ENCODE measurements at regions of chr21 and their contacts with region 1.

Region 1: GRCh38 chr21:36989699-36990507 is 16.6 kb upstream of the RIPPLY3 start:
- DNase-seq: peak; percentile 57 to 94 (median 82)
- ATAC-seq: peak; percentile 70
- H3K4me3 ChIP-seq: peak overlapping the region; percentile 59 to 63
- H3K4me3 Mint-ChIP-seq: peak overlapping the region; percentile 87
- H3K27ac ChIP-seq: peak overlapping the region; percentile 48 to 86
- H3K27ac Mint-ChIP-seq: peak overlapping the region; percentile 91
- H3K4me1 ChIP-seq: peaks cover 6% of the 10 kb centered on the region
- H3K4me1 Mint-ChIP-seq: peaks cover 22% of the 10 kb centered on the region
- H3K27me3 ChIP-seq: no peaks in the 10 kb centered on the region
- H3K27me3 Mint-ChIP-seq: no peaks in the 10 kb centered on the region
- CTCF ChIP-seq: peak; percentile 81

Region 2: GRCh38 chr21:36504067-36505058 is 485.5 kb before region 1 on chr21:
- CTCF ChIA-PET with region 1: interaction called, 4 read pairs
- POLR2A ChIA-PET with region 1: no interaction called
- intact Hi-C with region 1: loop called in 1 of 2 experiments (anchors 5 kb)
- DNase-seq: peak in 6 of 9 experiments; percentile 15 to 67 (median 50)
- ATAC-seq: no peak
- H3K4me3 ChIP-seq: no peak overlapping the region
- H3K4me3 Mint-ChIP-seq: no peak overlapping the region
- H3K27ac ChIP-seq: no peak overlapping the region
- H3K27ac Mint-ChIP-seq: no peak overlapping the region
- H3K4me1 ChIP-seq: no peaks in the 10 kb centered on the region
- H3K4me1 Mint-ChIP-seq: no peaks in the 10 kb centered on the region
- H3K27me3 ChIP-seq: no peaks in the 10 kb centered on the region
- H3K27me3 Mint-ChIP-seq: peaks cover 2% of the 10 kb centered on the region
- CTCF ChIP-seq: peak; percentile 97

Region 3: GRCh38 chr21:36934864-36935420 is 55.0 kb before region 1 on chr21:
- CTCF ChIA-PET with region 1: interaction called, 10 read pairs
- POLR2A ChIA-PET with region 1: no interaction called
- intact Hi-C with region 1: loop called in 1 of 2 experiments (anchors 1 kb)
- DNase-seq: no peak
- ATAC-seq: no peak
- H3K4me3 ChIP-seq: no peak overlapping the region
- H3K4me3 Mint-ChIP-seq: no peak overlapping the region
- H3K27ac ChIP-seq: no peak overlapping the region
- H3K27ac Mint-ChIP-seq: no peak overlapping the region
- H3K4me1 ChIP-seq: no peaks in the 10 kb centered on the region
- H3K4me1 Mint-ChIP-seq: peaks cover 3% of the 10 kb centered on the region
- H3K27me3 ChIP-seq: no peaks in the 10 kb centered on the region
- H3K27me3 Mint-ChIP-seq: no peaks in the 10 kb centered on the region
- CTCF ChIP-seq: no peak

Region 4: DNA sequence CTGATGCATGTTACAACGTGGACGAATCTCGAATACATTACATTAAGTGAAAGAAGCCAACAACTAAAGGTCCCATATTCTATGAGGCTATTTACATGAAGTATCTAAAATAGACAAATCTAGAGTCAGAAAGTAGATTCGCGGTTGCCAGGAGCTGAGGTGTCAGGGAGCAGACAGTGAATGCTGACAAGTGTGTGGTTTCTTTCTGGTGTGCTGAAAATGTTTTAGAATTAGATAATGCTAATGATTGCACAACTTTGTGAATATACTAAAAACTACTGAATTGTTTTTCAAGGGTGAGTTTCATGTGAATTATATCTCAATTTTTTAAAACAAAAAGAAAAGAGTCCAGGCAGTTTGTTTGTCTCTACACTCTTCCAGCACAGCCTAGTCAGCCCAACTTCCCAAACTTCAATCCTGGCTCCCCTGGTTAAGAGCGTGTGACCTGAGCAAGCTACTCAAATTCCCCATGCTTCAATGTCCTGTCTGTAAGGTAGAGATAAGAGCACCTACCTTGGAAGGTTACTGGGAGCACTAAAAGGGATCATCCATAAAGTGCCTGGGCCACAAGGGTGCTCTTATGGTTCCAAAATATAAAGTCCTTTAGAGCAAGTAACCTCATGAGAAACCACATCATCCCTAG is 44.3 kb before region 1 on chr21:
- CTCF ChIA-PET with region 1: interaction called, 10 read pairs
- POLR2A ChIA-PET with region 1: no interaction called
- intact Hi-C with region 1: no loop called
- DNase-seq: no peak
- ATAC-seq: no peak
- H3K4me3 ChIP-seq: no peak overlapping the region
- H3K4me3 Mint-ChIP-seq: no peak overlapping the region
- H3K27ac ChIP-seq: no peak overlapping the region
- H3K27ac Mint-ChIP-seq: no peak overlapping the region
- H3K4me1 ChIP-seq: no peaks in the 10 kb centered on the region
- H3K4me1 Mint-ChIP-seq: no peaks in the 10 kb centered on the region
- H3K27me3 ChIP-seq: no peaks in the 10 kb centered on the region
- H3K27me3 Mint-ChIP-seq: no peaks in the 10 kb centered on the region
- CTCF ChIP-seq: no peak

Region 5: DNA sequence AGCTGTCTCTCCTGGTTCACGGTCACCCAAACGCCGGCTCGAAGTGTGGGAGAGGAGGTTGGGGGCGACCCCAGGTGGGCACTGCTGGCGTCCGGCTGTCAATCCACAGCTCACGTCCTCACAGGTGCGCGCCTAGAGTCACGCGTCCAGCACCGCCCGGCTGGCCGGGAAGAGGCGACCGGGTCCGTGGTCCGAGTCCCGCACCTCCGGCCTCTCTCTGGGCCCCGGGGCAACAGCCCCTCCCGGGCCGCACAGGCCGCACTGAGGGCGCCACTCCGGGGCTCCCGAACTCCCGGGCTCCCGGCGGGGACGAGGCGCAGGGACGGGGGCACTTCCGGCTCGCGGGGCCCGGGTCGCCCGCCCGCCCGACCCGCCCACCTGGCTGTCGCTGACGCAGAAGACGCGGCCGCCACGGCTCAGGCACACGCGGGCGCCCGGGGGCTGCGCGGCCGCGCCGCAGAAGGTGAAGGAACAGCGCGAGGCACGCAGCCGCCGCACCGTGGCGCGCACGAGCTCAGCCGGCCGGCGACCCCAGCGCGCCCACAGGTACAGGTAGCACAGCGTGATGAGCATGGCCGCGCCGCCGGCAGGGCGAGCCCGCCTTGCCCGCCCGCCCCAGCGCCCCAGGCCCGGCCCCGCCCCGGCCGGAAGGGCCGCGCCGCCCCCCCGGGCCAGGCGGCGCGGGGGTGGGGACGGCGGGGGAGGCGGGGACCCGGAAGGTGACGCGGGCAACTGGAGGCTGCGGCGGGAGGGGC is 23.7 kb before region 1 on chr21 and contains the start of gene HLCS:
- CTCF ChIA-PET with region 1: interaction called, 14 read pairs
- POLR2A ChIA-PET with region 1: interaction called, 9 read pairs
- intact Hi-C with region 1: loop called (anchors 1 kb)
- DNase-seq: peak; percentile 43 to 90 (median 74)
- ATAC-seq: peak; percentile 90
- H3K4me3 ChIP-seq: peak within 1 kb of the TSS; percentile 65 to 66
- H3K4me3 Mint-ChIP-seq: peak within 1 kb of the TSS; percentile 85
- H3K27ac ChIP-seq: peak within 1 kb of the TSS; percentile 63 to 69
- H3K27ac Mint-ChIP-seq: peak within 1 kb of the TSS; percentile 90
- H3K4me1 ChIP-seq: peaks cover 10% of the 10 kb centered on the region
- H3K4me1 Mint-ChIP-seq: peaks cover 21% of the 10 kb centered on the region
- H3K27me3 ChIP-seq: no peaks in the 10 kb centered on the region
- H3K27me3 Mint-ChIP-seq: no peaks in the 10 kb centered on the region
- CTCF ChIP-seq: peak; percentile 36
- total RNA-seq, gene HLCS: 9.7 to 13.6 TPM

Region 6: GRCh38 chr21:36976882-36977651 is 12.8 kb before region 1 on chr21:
- CTCF ChIA-PET with region 1: interaction called, 15 read pairs
- POLR2A ChIA-PET with region 1: interaction called, 5 read pairs
- intact Hi-C with region 1: loop called (anchors 1 kb)
- DNase-seq: peak in 5 of 9 experiments; percentile 23 to 75 (median 62)
- ATAC-seq: peak; percentile 77
- H3K4me3 ChIP-seq: no peak overlapping the region
- H3K4me3 Mint-ChIP-seq: no peak overlapping the region
- H3K27ac ChIP-seq: peak overlapping the region in 1 of 2 experiments; percentile 28
- H3K27ac Mint-ChIP-seq: peak overlapping the region; percentile 80
- H3K4me1 ChIP-seq: peaks cover 8% of the 10 kb centered on the region
- H3K4me1 Mint-ChIP-seq: peaks cover 23% of the 10 kb centered on the region
- H3K27me3 ChIP-seq: no peaks in the 10 kb centered on the region
- H3K27me3 Mint-ChIP-seq: peaks cover 2% of the 10 kb centered on the region
- CTCF ChIP-seq: peak; percentile 46

Region 7: GRCh38 chr21:37009740-37010341 is 19.9 kb after region 1 on chr21:
- CTCF ChIA-PET with region 1: interaction called, 7 read pairs
- POLR2A ChIA-PET with region 1: interaction called, 3 read pairs
- intact Hi-C with region 1: loop called (anchors 2 kb)
- DNase-seq: peak; percentile 60 to 85 (median 80)
- ATAC-seq: peak; percentile 91
- H3K4me3 ChIP-seq: peak overlapping the region; percentile 7 to 37
- H3K4me3 Mint-ChIP-seq: peak overlapping the region; percentile 58
- H3K27ac ChIP-seq: no peak overlapping the region
- H3K27ac Mint-ChIP-seq: no peak overlapping the region
- H3K4me1 ChIP-seq: peaks cover 24% of the 10 kb centered on the region
- H3K4me1 Mint-ChIP-seq: peaks cover 16% of the 10 kb centered on the region
- H3K27me3 ChIP-seq: peaks cover 4 to 20% of the 10 kb centered on the region in 2 experiments
- H3K27me3 Mint-ChIP-seq: peaks cover 42% of the 10 kb centered on the region
- CTCF ChIP-seq: peak; percentile 85

Region 8: GRCh38 chr21:37319551-37319950 is 329.6 kb after region 1 on chr21:
- CTCF ChIA-PET with region 1: no interaction called
- POLR2A ChIA-PET with region 1: no interaction called
- intact Hi-C with region 1: no loop called
- DNase-seq: no peak
- ATAC-seq: no peak
- H3K4me3 ChIP-seq: no peak overlapping the region
- H3K4me3 Mint-ChIP-seq: no peak overlapping the region
- H3K27ac ChIP-seq: no peak overlapping the region
- H3K27ac Mint-ChIP-seq: no peak overlapping the region
- H3K4me1 ChIP-seq: no peaks in the 10 kb centered on the region
- H3K4me1 Mint-ChIP-seq: no peaks in the 10 kb centered on the region
- H3K27me3 ChIP-seq: no peaks in the 10 kb centered on the region
- H3K27me3 Mint-ChIP-seq: no peaks in the 10 kb centered on the region
- CTCF ChIP-seq: no peak

Measured in CD8-positive, alpha-beta T cell (primary cell).